CD8-positive, alpha-beta T cell (primary cell): ENCODE measurements at regions of chr2 and their contacts with region 1.

Region 1: DNA sequence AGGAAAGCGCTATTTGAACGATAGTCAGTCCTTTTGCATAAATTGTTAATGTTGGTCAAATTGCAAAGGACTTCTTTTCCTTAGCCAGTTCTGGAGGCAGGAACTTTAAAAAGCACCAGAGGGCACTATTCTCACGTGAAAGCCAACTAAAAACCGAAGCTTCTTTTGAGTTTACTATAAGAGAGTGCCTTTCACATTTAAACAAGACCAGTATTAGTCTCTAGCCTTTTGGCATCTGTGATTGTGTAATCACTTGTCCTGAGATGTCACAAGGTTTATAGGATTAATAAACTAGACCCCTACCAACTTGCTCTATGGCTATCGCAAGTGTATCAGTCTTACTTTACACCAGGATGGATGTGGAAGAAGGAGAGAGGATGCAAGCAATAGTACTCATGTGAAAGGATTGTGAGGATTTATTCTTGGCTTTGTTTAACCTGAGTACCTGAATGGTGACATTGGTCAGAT is 14.4 kb upstream of the STAT4 start:
- DNase-seq: peak in 3 of 9 experiments; percentile 32 to 72 (median 65)
- ATAC-seq: peak; percentile 69
- H3K4me3 ChIP-seq: no peak overlapping the region
- H3K4me3 Mint-ChIP-seq: no peak overlapping the region
- H3K27ac ChIP-seq: no peak overlapping the region
- H3K27ac Mint-ChIP-seq: no peak overlapping the region
- H3K4me1 ChIP-seq: no peaks in the 10 kb centered on the region
- H3K4me1 Mint-ChIP-seq: peaks cover 7% of the 10 kb centered on the region
- H3K27me3 ChIP-seq: no peaks in the 10 kb centered on the region
- H3K27me3 Mint-ChIP-seq: no peaks in the 10 kb centered on the region
- CTCF ChIP-seq: peak; percentile 86

Region 2: GRCh38 chr2:191150600-191151330 is 14.4 kb before region 1 on chr2 and contains the start of gene STAT4:
- CTCF ChIA-PET with region 1: interaction called, 48 read pairs
- POLR2A ChIA-PET with region 1: interaction called, 4 read pairs
- intact Hi-C with region 1: no loop called
- DNase-seq: peak; percentile 64 to 98 (median 82)
- ATAC-seq: peak; percentile 82
- H3K4me3 ChIP-seq: peak within 1 kb of the TSS; percentile 80 to 90
- H3K4me3 Mint-ChIP-seq: peak within 1 kb of the TSS; percentile 96
- H3K27ac ChIP-seq: peak within 1 kb of the TSS; percentile 93 to 98
- H3K27ac Mint-ChIP-seq: peak within 1 kb of the TSS; percentile 95
- H3K4me1 ChIP-seq: peaks cover 49% of the 10 kb centered on the region
- H3K4me1 Mint-ChIP-seq: peaks cover 54% of the 10 kb centered on the region
- H3K27me3 ChIP-seq: no peaks in the 10 kb centered on the region
- H3K27me3 Mint-ChIP-seq: no peaks in the 10 kb centered on the region
- CTCF ChIP-seq: no peak
- total RNA-seq, gene STAT4: 136 to 141 TPM

Region 3: GRCh38 chr2:191218292-191218898 is 53.2 kb after region 1 on chr2:
- CTCF ChIA-PET with region 1: interaction called, 13 read pairs
- POLR2A ChIA-PET with region 1: no interaction called
- intact Hi-C with region 1: loop called (anchors 2 to 5 kb)
- DNase-seq: peak in 7 of 9 experiments; percentile 27 to 70 (median 52)
- ATAC-seq: peak; percentile 69
- H3K4me3 ChIP-seq: no peak overlapping the region
- H3K4me3 Mint-ChIP-seq: no peak overlapping the region
- H3K27ac ChIP-seq: no peak overlapping the region
- H3K27ac Mint-ChIP-seq: no peak overlapping the region
- H3K4me1 ChIP-seq: no peaks in the 10 kb centered on the region
- H3K4me1 Mint-ChIP-seq: peaks cover 7% of the 10 kb centered on the region
- H3K27me3 ChIP-seq: peaks cover 0 to 3% of the 10 kb centered on the region in 2 experiments
- H3K27me3 Mint-ChIP-seq: no peaks in the 10 kb centered on the region
- CTCF ChIP-seq: peak; percentile 54

Region 4: DNA sequence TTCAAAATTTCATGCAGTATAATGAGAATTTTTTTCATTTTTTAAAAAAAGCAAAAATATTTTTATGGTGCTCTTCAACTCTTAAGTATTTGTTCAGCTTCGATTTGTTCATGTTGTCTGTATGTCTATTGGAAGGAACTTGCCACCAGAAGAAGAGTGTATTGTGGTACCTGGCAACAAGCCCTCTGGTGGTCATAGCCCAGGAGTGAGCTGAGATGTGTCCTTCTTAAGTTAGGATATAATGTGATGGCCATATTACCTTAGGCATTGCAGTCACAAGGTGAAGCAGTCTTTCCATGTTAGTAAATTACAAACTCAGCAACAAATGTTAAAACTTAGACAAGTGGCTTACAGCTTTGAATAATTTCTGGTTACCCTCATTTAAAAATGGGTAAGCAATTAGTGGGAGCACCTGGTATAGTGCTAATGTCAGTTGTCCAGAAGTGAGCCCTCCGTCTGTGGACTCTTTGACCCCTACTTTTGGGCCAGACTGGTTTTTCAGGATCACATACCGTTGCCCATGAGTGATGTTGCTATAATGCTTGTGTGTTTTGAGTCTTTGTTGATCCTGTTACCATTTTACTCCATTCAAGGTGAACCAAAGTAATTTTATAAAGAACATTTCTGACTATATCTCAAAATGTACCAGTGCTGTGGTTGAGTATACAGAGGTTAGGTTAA is 137.4 kb after region 1 on chr2:
- CTCF ChIA-PET with region 1: interaction called, 12 read pairs
- POLR2A ChIA-PET with region 1: no interaction called
- intact Hi-C with region 1: loop called (anchors 1 kb)
- DNase-seq: peak in 4 of 9 experiments; percentile 13 to 60 (median 38)
- ATAC-seq: peak; percentile 46
- H3K4me3 ChIP-seq: no peak overlapping the region
- H3K4me3 Mint-ChIP-seq: no peak overlapping the region
- H3K27ac ChIP-seq: no peak overlapping the region
- H3K27ac Mint-ChIP-seq: no peak overlapping the region
- H3K4me1 ChIP-seq: no peaks in the 10 kb centered on the region
- H3K4me1 Mint-ChIP-seq: no peaks in the 10 kb centered on the region
- H3K27me3 ChIP-seq: no peaks in the 10 kb centered on the region
- H3K27me3 Mint-ChIP-seq: peaks cover 6% of the 10 kb centered on the region
- CTCF ChIP-seq: no peak

Region 5: GRCh38 chr2:191352536-191352935 is 187.3 kb after region 1 on chr2:
- CTCF ChIA-PET with region 1: no interaction called
- POLR2A ChIA-PET with region 1: no interaction called
- intact Hi-C with region 1: no loop called
- DNase-seq: no peak
- ATAC-seq: no peak
- H3K4me3 ChIP-seq: no peak overlapping the region
- H3K4me3 Mint-ChIP-seq: no peak overlapping the region
- H3K27ac ChIP-seq: no peak overlapping the region
- H3K27ac Mint-ChIP-seq: no peak overlapping the region
- H3K4me1 ChIP-seq: no peaks in the 10 kb centered on the region
- H3K4me1 Mint-ChIP-seq: no peaks in the 10 kb centered on the region
- H3K27me3 ChIP-seq: no peaks in the 10 kb centered on the region
- H3K27me3 Mint-ChIP-seq: no peaks in the 10 kb centered on the region
- CTCF ChIP-seq: no peak

Region 6: DNA sequence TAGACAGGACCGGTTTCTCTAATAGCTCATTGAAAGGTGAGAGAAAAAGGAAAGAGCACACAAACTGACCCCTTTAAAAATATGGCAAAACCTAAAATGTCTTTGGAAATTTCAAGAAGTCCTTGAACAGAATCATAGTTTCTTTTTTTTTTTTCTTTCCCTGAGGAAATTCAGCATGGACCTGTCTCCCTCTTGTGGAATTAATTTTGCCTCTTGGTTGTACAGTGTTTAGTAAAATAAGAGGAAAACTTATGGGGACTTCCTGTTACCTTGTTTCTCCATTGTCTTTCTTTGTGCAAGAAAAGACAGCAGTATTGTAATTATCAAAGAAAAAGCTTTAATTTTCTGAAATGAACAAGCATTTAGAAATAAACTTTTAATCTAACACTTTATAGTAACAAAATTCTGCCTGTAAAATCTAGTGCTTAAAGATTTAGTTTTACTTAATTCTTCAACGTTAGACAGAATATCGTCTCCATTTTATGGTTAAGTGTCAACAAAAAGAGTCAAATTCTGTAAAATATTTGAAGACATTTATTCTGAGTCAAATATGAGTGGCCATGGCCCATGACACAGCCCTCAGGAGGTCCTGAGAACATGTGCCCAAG is 336.5 kb after region 1 on chr2:
- CTCF ChIA-PET with region 1: interaction called, 3 read pairs
- POLR2A ChIA-PET with region 1: no interaction called
- intact Hi-C with region 1: loop called in 1 of 2 experiments (anchors 5 kb)
- DNase-seq: no peak
- ATAC-seq: no peak
- H3K4me3 ChIP-seq: no peak overlapping the region
- H3K4me3 Mint-ChIP-seq: no peak overlapping the region
- H3K27ac ChIP-seq: no peak overlapping the region
- H3K27ac Mint-ChIP-seq: no peak overlapping the region
- H3K4me1 ChIP-seq: no peaks in the 10 kb centered on the region
- H3K4me1 Mint-ChIP-seq: no peaks in the 10 kb centered on the region
- H3K27me3 ChIP-seq: no peaks in the 10 kb centered on the region
- H3K27me3 Mint-ChIP-seq: no peaks in the 10 kb centered on the region
- CTCF ChIP-seq: no peak

Region 7: GRCh38 chr2:191555092-191555742 is 390.0 kb after region 1 on chr2:
- CTCF ChIA-PET with region 1: interaction called, 4 read pairs
- POLR2A ChIA-PET with region 1: no interaction called
- intact Hi-C with region 1: loop called in 1 of 2 experiments (anchors 10 kb)
- DNase-seq: peak; percentile 62 to 85 (median 80)
- ATAC-seq: peak; percentile 75
- H3K4me3 ChIP-seq: no peak overlapping the region
- H3K4me3 Mint-ChIP-seq: no peak overlapping the region
- H3K27ac ChIP-seq: no peak overlapping the region
- H3K27ac Mint-ChIP-seq: no peak overlapping the region
- H3K4me1 ChIP-seq: no peaks in the 10 kb centered on the region
- H3K4me1 Mint-ChIP-seq: peaks cover 4% of the 10 kb centered on the region
- H3K27me3 ChIP-seq: no peaks in the 10 kb centered on the region
- H3K27me3 Mint-ChIP-seq: peaks cover 15% of the 10 kb centered on the region
- CTCF ChIP-seq: peak; percentile 87

Region 8: GRCh38 chr2:192162392-192163042 is 997.3 kb after region 1 on chr2:
- CTCF ChIA-PET with region 1: interaction called, 16 read pairs
- POLR2A ChIA-PET with region 1: no interaction called
- intact Hi-C with region 1: loop called (anchors 1 to 2 kb)
- DNase-seq: peak; percentile 23 to 74 (median 64)
- ATAC-seq: peak; percentile 49
- H3K4me3 ChIP-seq: no peak overlapping the region
- H3K4me3 Mint-ChIP-seq: peak overlapping the region; percentile 4
- H3K27ac ChIP-seq: no peak overlapping the region
- H3K27ac Mint-ChIP-seq: no peak overlapping the region
- H3K4me1 ChIP-seq: peaks cover 4% of the 10 kb centered on the region
- H3K4me1 Mint-ChIP-seq: peaks cover 9% of the 10 kb centered on the region
- H3K27me3 ChIP-seq: no peaks in the 10 kb centered on the region
- H3K27me3 Mint-ChIP-seq: peaks cover 11% of the 10 kb centered on the region
- CTCF ChIP-seq: peak; percentile 89